AG04449 (cell line): ENCODE measurements at regions of chr7 and their contacts with region 1.

Region 1: GRCh38 chr7:124765401-124766352 is at the start of gene GPR37:
- DNase-seq: no peak
- H3K4me3 ChIP-seq: peak within 1 kb of the TSS; percentile 46
- CTCF ChIP-seq: peak; percentile 11

Region 2: GRCh38 chr7:124171068-124171467 is 594.6 kb before region 1 on chr7:
- CTCF ChIA-PET with region 1: interaction called, 11 read pairs
- POLR2A ChIA-PET with region 1: no interaction called
- DNase-seq: peak; percentile 4
- H3K4me3 ChIP-seq: no peak overlapping the region
- CTCF ChIP-seq: peak; percentile 32

Region 3: GRCh38 chr7:124784879-124785818 is 19.5 kb after region 1 on chr7:
- CTCF ChIA-PET with region 1: interaction called, 16 read pairs
- POLR2A ChIA-PET with region 1: no interaction called
- DNase-seq: peak; percentile 12
- H3K4me3 ChIP-seq: no peak overlapping the region
- CTCF ChIP-seq: peak; percentile 80